Activated T-helper 1 cell treated with anti-CD3 and anti-CD28 coated beads, Interleukin-12 subunit alpha, Interleukin-12 subunit beta, Interleukin-2, Interleukin-4 antibody, amounts not matched to agents 30 ng/mL and 10 ng/mL and 1 ng/mL, durations not matched to agents 14 hours and 24 hours and 36 hours (primary cell): ENCODE measurements at regions of chrX and their contacts with region 1.

Region 1: GRCh38 chrX:9312922-9313867 is 151.7 kb upstream of the TBL1X start:
- DNase-seq: peak; percentile 32
- H3K4me3 Mint-ChIP-seq: no peak overlapping the region
- H3K27ac Mint-ChIP-seq: peak overlapping the region; percentile 58
- H3K4me1 Mint-ChIP-seq: peaks cover 11% of the 10 kb centered on the region
- H3K27me3 Mint-ChIP-seq: no peaks in the 10 kb centered on the region

Region 2: GRCh38 chrX:8971116-8971515 is 342.1 kb before region 1 on chrX:
- intact Hi-C with region 1: loop called (anchors 10 kb)
- DNase-seq: no peak
- H3K4me3 Mint-ChIP-seq: no peak overlapping the region
- H3K27ac Mint-ChIP-seq: no peak overlapping the region
- H3K4me1 Mint-ChIP-seq: peaks cover 6% of the 10 kb centered on the region
- H3K27me3 Mint-ChIP-seq: peaks cover 2% of the 10 kb centered on the region

Region 3: GRCh38 chrX:9278475-9279233 is 34.5 kb before region 1 on chrX:
- intact Hi-C with region 1: no loop called
- DNase-seq: no peak
- H3K4me3 Mint-ChIP-seq: peak overlapping the region; percentile 57
- H3K27ac Mint-ChIP-seq: peak overlapping the region; percentile 73
- H3K4me1 Mint-ChIP-seq: peaks cover 30% of the 10 kb centered on the region
- H3K27me3 Mint-ChIP-seq: peaks cover 2% of the 10 kb centered on the region